Activated T-helper 1 cell treated with anti-CD3 and anti-CD28 coated beads, Interleukin-12 subunit alpha, Interleukin-12 subunit beta, Interleukin-2, Interleukin-4 antibody, amounts not matched to agents 30 ng/mL and 10 ng/mL and 1 ng/mL, durations not matched to agents 14 hours and 24 hours and 36 hours (primary cell): ENCODE measurements at regions of chr19 and their contacts with region 1.

Region 1: DNA sequence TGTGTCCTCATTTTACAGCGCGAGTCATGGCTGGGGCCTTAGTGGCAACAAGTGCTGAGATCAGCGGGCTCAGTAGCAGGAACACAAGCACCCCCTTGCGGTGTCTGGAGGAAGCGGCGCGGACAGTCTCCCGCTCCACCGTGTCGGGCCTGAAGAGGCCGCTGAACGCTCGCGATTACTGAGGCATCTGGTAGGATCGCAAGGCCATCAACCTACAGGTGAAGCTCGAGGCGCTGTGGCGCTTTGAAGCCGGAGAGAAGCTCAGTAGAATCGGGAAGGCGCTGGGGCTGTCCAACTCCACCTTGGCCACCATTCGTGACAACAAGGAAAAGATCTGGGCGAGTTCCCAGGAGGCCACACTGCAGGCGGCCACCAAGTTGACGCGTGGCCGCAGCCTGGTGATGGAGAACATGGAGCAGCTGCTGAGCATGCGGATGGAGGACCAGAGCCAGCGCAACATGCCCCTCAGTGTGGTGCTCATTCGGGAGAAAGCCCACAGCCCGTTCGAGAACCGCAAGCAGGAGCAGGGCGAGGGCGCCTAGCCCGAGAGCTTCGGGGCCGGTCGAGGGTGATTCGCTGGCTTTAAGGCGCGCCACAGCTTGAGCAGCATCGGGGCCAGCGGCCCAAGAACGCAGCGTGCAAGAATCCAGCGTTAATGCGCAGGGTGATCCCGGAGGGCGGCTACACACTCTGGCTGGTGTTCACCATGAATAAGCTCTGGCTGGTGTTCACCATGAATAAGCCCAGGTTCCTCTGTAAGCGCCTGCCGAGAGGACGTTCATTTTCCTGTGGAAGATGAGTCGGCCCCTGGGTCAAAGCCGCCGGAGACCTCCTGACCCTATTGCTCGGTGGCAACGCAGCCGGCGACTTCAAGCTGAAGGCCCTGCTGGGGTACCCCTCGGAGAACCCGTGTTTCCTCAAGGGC is 8.4 kb upstream of the MZF1 start:
- DNase-seq: peak; percentile 86
- H3K4me3 Mint-ChIP-seq: no peak overlapping the region
- H3K27ac Mint-ChIP-seq: peak overlapping the region; percentile 67
- H3K4me1 Mint-ChIP-seq: peaks cover 33% of the 10 kb centered on the region
- H3K27me3 Mint-ChIP-seq: no peaks in the 10 kb centered on the region

Region 2: DNA sequence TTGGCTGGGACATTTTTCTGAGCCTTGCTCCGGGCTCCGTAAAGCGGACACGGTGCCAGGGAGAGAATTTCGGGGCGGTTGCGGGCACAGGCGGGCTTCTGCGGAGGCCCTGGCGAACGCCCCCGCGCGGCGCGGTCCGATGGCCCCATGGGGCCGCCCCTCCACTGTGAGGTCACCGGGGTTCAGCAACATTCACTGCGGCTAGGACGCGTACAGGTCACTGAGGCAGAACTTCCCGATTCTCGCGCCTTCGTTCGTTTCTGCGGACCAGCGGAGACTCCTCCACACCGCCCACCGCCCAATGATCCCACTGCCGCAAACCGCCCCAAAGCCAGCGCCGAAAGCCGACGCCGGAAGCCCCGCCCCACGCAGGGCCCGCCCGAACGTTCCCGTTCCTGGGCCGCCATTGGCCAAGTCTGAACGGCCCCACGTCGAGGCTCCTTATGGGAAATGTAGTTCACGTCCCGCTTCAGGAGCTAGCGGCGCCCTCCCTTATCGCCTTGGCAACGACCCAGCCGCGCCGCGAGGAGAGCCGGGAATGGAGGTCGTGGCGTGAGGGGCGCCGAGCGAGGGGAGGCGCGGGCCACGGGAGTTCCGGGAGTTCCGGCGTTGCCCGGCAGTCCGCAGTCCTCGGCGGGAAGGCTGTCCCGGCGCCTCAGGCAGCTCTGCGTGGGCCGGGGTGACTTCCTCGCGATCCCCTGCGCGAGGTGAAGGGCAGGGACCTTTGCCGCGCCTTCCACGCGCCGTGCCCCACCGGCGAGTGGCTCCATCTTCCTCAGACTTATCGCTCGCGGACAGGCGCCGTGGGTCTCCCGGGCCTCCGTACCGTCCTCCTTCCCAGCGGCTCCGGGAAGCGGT is 173.1 kb before region 1 on chr19 and contains the start of gene ZNF584:
- intact Hi-C with region 1: no loop called
- DNase-seq: peak; percentile 90
- H3K4me3 Mint-ChIP-seq: peak within 1 kb of the TSS; percentile 84
- H3K27ac Mint-ChIP-seq: peak within 1 kb of the TSS; percentile 98
- H3K4me1 Mint-ChIP-seq: peaks cover 35% of the 10 kb centered on the region
- H3K27me3 Mint-ChIP-seq: no peaks in the 10 kb centered on the region
- total RNA-seq, gene ZNF584: 17.8 and 20.6 TPM in 2 replicates

Region 3: DNA sequence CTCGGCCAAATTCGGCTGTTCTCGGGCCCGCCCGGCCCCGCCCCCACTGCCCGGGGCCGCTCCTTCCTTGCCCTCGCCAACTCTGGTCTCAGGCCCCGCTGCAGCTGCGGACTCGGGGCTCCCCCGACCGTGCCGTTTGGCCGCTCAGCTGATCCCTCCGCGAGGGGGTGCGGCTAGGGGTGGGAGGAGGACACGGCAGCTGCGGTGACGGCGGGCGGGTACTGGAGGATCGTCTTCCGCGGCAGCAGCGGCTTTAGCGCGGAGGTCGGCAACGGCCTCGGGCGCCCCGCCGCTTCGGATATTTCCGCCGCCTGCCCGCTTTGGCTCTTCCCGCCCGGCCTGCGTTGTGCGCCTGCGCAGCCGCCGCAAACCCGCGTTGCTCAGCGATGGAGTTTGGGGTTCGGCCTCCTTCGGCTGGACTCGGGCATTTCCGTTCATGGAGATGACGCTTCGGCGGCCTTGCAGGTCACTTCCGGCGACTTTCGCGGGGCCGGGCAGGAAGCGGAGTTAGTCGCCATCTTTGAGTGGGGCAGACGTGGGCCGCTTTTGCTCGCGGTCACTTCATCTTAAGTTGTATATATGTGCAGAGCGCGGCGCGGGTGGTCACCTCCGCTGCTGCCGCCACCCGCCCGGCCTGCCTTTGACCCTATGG is 22.7 kb before region 1 on chr19:
- intact Hi-C with region 1: loop called (anchors 1 kb)
- DNase-seq: peak; percentile 100
- H3K4me3 Mint-ChIP-seq: peak overlapping the region; percentile 95
- H3K27ac Mint-ChIP-seq: peak overlapping the region; percentile 99
- H3K4me1 Mint-ChIP-seq: peaks cover 66% of the 10 kb centered on the region
- H3K27me3 Mint-ChIP-seq: peaks cover 1% of the 10 kb centered on the region